AG04450 (cell line): ENCODE measurements at regions of chr1 and their contacts with region 1.

Region 1: GRCh38 chr1:22749919-22750688 is 39.5 kb downstream of the EPHB2 start:
- DNase-seq: peak; percentile 88
- H3K4me3 ChIP-seq: no peak overlapping the region
- H3K27ac ChIP-seq: peak overlapping the region; percentile 93
- H3K27me3 ChIP-seq: no peaks in the 10 kb centered on the region
- CTCF ChIP-seq: no peak

Region 2: GRCh38 chr1:22592919-22593790 is 156.9 kb before region 1 on chr1:
- CTCF ChIA-PET with region 1: no interaction called
- POLR2A ChIA-PET with region 1: no interaction called
- DNase-seq: no peak
- H3K4me3 ChIP-seq: no peak overlapping the region
- H3K27ac ChIP-seq: no peak overlapping the region
- H3K27me3 ChIP-seq: peaks cover 35% of the 10 kb centered on the region
- CTCF ChIP-seq: no peak

Region 3: DNA sequence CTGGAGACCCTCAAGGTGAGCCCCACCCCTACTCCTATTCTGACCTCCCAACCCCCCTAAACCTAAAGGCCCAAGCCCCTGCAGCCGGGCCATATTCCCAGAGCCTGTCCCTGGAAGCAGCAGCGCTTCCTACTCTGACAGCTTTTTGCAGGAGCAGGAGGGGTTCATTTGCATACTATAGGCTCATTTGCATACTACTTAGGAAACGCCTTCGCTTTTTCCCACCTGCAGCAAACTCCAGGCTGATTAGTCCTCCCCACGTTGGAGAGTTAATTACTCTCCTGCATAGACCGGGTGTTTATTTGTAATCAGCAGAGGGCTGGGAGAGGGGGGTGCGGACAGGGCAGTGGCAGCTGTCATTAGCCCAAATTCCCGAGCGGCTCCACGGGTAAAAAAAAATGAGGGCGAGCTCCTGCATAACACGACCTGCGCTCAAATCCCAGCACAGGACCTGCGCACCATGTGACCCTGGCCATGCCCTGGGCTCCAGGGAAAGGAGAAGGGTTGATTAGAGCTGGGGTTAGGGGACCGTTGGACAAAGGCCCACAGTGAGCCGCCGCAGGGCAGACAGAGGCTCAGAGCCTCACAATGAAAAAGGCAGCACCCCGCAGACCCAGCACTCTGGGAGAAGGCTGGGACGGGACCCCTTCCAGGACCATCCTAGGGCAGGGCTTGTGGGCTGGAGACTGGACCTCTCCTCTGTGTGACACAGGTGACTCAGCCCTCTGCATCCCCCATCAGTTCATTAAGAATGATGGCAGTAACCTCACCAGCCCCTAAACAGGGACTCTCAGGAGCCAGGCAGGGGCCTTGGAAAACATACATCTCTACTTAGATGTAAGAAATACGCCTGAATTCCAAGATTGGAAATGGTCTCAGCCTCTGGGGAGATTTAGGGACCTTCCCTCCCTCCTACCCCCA is 123.6 kb before region 1 on chr1:
- CTCF ChIA-PET with region 1: no interaction called
- POLR2A ChIA-PET with region 1: no interaction called
- DNase-seq: no peak
- H3K4me3 ChIP-seq: no peak overlapping the region
- H3K27ac ChIP-seq: no peak overlapping the region
- H3K27me3 ChIP-seq: peaks cover 39% of the 10 kb centered on the region
- CTCF ChIP-seq: no peak

Region 4: GRCh38 chr1:22808676-22809483 is 58.8 kb after region 1 on chr1:
- CTCF ChIA-PET with region 1: no interaction called
- POLR2A ChIA-PET with region 1: interaction called, 10 read pairs
- DNase-seq: peak; percentile 37
- H3K4me3 ChIP-seq: no peak overlapping the region
- H3K27ac ChIP-seq: peak overlapping the region; percentile 77
- H3K27me3 ChIP-seq: no peaks in the 10 kb centered on the region
- CTCF ChIP-seq: no peak

Region 5: GRCh38 chr1:23129846-23130245 is 379.7 kb after region 1 on chr1:
- CTCF ChIA-PET with region 1: no interaction called
- POLR2A ChIA-PET with region 1: no interaction called
- DNase-seq: no peak
- H3K4me3 ChIP-seq: no peak overlapping the region
- H3K27ac ChIP-seq: no peak overlapping the region
- H3K27me3 ChIP-seq: no peaks in the 10 kb centered on the region
- CTCF ChIP-seq: no peak